ENCODE measurements at regions of chrX and their contacts with region 1.

Region 1: DNA sequence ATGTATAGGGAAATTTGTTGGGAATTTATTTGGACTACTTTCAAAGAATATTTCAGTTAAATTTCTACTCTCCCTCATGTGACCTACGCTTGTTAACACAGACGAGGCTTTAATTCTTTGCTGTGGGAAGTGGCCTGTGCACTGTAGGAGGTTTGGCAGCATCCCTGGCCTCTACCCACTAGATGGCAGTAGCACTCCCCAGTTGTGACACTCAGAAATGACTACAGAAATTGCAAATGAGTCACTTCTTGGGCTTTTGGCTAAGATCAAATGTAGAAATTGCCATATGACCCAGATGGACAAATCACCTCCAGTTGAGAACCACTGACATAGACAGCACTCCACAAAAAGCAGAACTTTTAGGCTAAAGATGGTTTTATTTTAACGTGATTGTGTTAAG is 22.1 kb downstream of the PIR start:
- DNase-seq: peak; percentile 27
- ATAC-seq: peak; percentile 95
- H3K4me3 ChIP-seq: no peak overlapping the region
- H3K27ac ChIP-seq: no peak overlapping the region
- H3K4me1 ChIP-seq: no peaks in the 10 kb centered on the region
- H3K27me3 ChIP-seq: no peaks in the 10 kb centered on the region; a peak in 1 of 4 replicates
- CTCF ChIP-seq: peak; percentile 84 to 91 (median 85)
- EP300 ChIP-seq: no peak
- POLR2A ChIP-seq: no peak
- RAD21 ChIP-seq: peak; percentile 77

Region 2: DNA sequence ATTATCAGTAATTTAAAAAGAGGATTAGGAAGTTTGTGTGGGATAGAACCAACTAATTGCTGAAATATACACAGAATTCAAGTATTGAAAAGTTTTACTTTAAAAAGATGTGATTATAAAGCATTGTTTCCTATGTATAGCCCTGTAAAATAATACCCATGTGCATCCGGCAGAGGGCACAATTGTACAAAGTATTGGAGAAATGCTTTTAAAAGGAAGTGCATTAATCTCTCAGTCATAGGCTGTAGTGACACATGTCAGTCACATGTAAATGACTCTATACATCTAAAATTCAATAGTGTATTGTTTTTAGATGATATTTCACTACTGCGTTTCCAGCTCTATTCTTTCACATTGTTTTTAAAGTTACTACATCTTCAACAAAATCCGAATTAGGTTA is 1431.7 kb before region 1 on chrX:
- CTCF ChIA-PET with region 1: no interaction called
- POLR2A ChIA-PET with region 1: no interaction called
- RAD21 ChIA-PET with region 1: interaction called, 3 read pairs
- SMC1A ChIA-PET with region 1: no interaction called
- in situ Hi-C with region 1: no loop called
- intact Hi-C with region 1: loop called (anchors 5 kb)
- DNase-seq: no peak
- ATAC-seq: peak; percentile 95
- H3K4me3 ChIP-seq: no peak overlapping the region
- H3K27ac ChIP-seq: no peak overlapping the region
- H3K4me1 ChIP-seq: no peaks in the 10 kb centered on the region
- H3K27me3 ChIP-seq: peaks cover 0 to 2% of the 10 kb centered on the region in 2 experiments; a peak in 1 of 4 replicates
- CTCF ChIP-seq: peak; percentile 48 to 81 (median 61); a peak in 5 of 6 replicates
- EP300 ChIP-seq: peak in 1 of 2 experiments; percentile 99; a peak in 2 of 4 replicates
- POLR2A ChIP-seq: no peak
- RAD21 ChIP-seq: peak; percentile 88

Region 3: DNA sequence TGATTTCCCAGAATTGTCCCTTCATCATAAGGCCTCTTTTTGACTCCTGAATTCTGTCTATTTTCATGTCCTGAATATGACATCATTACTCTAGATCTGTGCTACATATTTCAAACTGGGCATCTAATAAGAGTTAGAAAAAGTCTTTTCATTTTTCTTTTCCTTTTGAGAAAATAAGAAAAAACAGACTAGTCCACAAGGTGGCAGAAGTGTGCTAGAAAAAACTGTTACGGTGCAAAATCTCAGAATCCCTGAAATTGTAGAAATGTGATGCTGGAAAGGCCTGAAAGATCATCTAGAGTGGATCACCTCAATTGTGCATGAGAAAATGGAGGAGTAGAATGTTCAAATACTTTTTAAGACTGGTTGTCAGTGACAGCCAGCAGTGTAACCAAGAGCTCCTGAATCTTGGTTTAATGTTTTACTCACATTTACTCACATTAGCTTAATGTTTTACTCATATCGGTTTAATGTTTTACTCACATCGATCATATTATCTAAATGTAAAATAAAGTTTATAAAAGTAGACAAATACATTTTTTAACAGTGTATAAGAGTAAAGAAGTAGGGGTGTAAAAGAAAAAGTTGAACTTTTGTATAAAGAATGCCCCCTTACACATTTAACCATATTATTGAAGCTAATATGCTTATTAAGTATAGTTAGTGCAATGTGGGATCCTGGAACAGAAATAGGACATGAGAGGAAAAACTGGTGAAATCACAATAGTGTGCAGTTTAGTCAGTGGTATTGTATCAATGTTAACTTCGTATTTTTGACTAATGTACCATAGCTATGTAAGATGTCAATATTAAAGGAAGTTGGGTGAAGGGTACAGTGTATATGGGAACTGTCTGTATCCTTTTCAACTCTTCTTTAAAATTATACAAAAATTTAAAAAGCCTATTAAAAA is 170.8 kb before region 1 on chrX:
- CTCF ChIA-PET with region 1: interaction called, 25 read pairs
- POLR2A ChIA-PET with region 1: no interaction called
- RAD21 ChIA-PET with region 1: interaction called, 7 read pairs
- SMC1A ChIA-PET with region 1: interaction called, 19 read pairs
- in situ Hi-C with region 1: no loop called
- intact Hi-C with region 1: loop called (anchors 2 kb)
- DNase-seq: no peak
- ATAC-seq: no peak; the same call in 2 of the 3 replicates
- H3K4me3 ChIP-seq: no peak overlapping the region
- H3K27ac ChIP-seq: no peak overlapping the region
- H3K4me1 ChIP-seq: no peaks in the 10 kb centered on the region
- H3K27me3 ChIP-seq: no peaks in the 10 kb centered on the region
- CTCF ChIP-seq: peak; percentile 39 to 40 (median 40); a peak in 4 of 6 replicates
- EP300 ChIP-seq: no peak
- POLR2A ChIP-seq: no peak
- RAD21 ChIP-seq: peak; percentile 32

Region 4: DNA sequence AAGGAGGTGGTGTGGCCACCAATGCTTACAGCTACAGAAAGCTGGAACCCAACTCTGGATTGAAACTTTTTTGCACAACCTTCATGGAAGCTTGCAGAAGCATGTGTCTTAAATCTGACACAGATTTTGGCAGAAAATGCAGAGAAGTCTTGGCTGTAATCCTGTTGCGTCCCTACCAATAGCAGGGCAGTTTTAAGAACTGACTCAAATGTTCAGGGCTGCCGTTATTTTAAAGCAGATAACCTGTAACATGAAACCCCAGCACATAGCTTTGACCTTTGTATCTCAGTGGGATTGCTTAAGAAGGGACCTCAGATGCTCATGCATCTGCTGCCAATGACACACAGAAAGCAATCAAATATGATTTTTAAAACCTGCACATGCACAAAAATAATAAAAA is 86.7 kb before region 1 on chrX and contains the start of gene VEGFD:
- CTCF ChIA-PET with region 1: interaction called, 60 read pairs
- POLR2A ChIA-PET with region 1: no interaction called
- RAD21 ChIA-PET with region 1: interaction called, 8 read pairs
- SMC1A ChIA-PET with region 1: interaction called, 16 read pairs
- in situ Hi-C with region 1: no loop called
- intact Hi-C with region 1: no loop called
- DNase-seq: no peak
- ATAC-seq: no peak
- H3K4me3 ChIP-seq: no peak within 1 kb of the TSS
- H3K27ac ChIP-seq: no peak within 1 kb of the TSS
- H3K4me1 ChIP-seq: no peaks in the 10 kb centered on the region
- H3K27me3 ChIP-seq: 0 out of 4 replicates have a peak, but pooled peaks cover 0 to 2% of the 10 kb centered on the region in 2 experiments
- CTCF ChIP-seq: no peak
- EP300 ChIP-seq: no peak
- POLR2A ChIP-seq: no peak
- RAD21 ChIP-seq: no peak
- polyA plus RNA-seq, gene VEGFD: not detected

Region 5: GRCh38 chrX:15493118-15493962 is 22.3 kb after region 1 on chrX and contains the start of gene PIR:
- CTCF ChIA-PET with region 1: interaction called, 13 read pairs
- POLR2A ChIA-PET with region 1: no interaction called
- RAD21 ChIA-PET with region 1: interaction called, 10 read pairs
- SMC1A ChIA-PET with region 1: interaction called, 12 read pairs
- in situ Hi-C with region 1: no loop called
- intact Hi-C with region 1: no loop called
- DNase-seq: peak; percentile 17
- ATAC-seq: peak; percentile 97
- H3K4me3 ChIP-seq: peak within 1 kb of the TSS; percentile 48
- H3K27ac ChIP-seq: peak within 1 kb of the TSS; percentile 52
- H3K4me1 ChIP-seq: no peaks in the 10 kb centered on the region
- H3K27me3 ChIP-seq: no peaks in the 10 kb centered on the region
- CTCF ChIP-seq: peak; percentile 31 to 41 (median 38); a peak in 4 of 6 replicates
- EP300 ChIP-seq: no peak
- POLR2A ChIP-seq: peak; percentile 68
- RAD21 ChIP-seq: no peak
- polyA plus RNA-seq, gene PIR: 10.4 to 10.9 TPM

Region 6: GRCh38 chrX:15564981-15565579 is 94.1 kb after region 1 on chrX:
- CTCF ChIA-PET with region 1: interaction called, 9 read pairs
- POLR2A ChIA-PET with region 1: no interaction called
- RAD21 ChIA-PET with region 1: interaction called, 7 read pairs
- SMC1A ChIA-PET with region 1: interaction called, 14 read pairs
- in situ Hi-C with region 1: no loop called
- intact Hi-C with region 1: loop called (anchors 1 kb)
- DNase-seq: peak; percentile 9
- ATAC-seq: peak; percentile 95
- H3K4me3 ChIP-seq: no peak overlapping the region
- H3K27ac ChIP-seq: no peak overlapping the region
- H3K4me1 ChIP-seq: no peaks in the 10 kb centered on the region
- H3K27me3 ChIP-seq: no peaks in the 10 kb centered on the region; a peak in 1 of 4 replicates
- CTCF ChIP-seq: peak; percentile 55 to 65 (median 57)
- EP300 ChIP-seq: no peak
- POLR2A ChIP-seq: no peak
- RAD21 ChIP-seq: peak; percentile 64